Activated T-helper 2 cell treated with anti-CD3 and anti-CD28 coated beads, Interferon-gamma antibody, Interleukin-2, Interleukin-4, amounts not matched to agents 10 μg/mL and 5 μg/mL and 100 μg/mL, durations not matched to agents 14 hours and 24 hours and 36 hours (primary cell): ENCODE measurements at regions of chr4 and their contacts with region 1.

Region 1: GRCh38 chr4:26288355-26288909 is 32.4 kb upstream of the RBPJ start:
- DNase-seq: peak; percentile 20
- H3K4me3 Mint-ChIP-seq: no peak overlapping the region
- H3K27ac Mint-ChIP-seq: peak overlapping the region; percentile 81
- H3K4me1 Mint-ChIP-seq: peaks cover 24% of the 10 kb centered on the region
- H3K27me3 Mint-ChIP-seq: no peaks in the 10 kb centered on the region

Region 2: DNA sequence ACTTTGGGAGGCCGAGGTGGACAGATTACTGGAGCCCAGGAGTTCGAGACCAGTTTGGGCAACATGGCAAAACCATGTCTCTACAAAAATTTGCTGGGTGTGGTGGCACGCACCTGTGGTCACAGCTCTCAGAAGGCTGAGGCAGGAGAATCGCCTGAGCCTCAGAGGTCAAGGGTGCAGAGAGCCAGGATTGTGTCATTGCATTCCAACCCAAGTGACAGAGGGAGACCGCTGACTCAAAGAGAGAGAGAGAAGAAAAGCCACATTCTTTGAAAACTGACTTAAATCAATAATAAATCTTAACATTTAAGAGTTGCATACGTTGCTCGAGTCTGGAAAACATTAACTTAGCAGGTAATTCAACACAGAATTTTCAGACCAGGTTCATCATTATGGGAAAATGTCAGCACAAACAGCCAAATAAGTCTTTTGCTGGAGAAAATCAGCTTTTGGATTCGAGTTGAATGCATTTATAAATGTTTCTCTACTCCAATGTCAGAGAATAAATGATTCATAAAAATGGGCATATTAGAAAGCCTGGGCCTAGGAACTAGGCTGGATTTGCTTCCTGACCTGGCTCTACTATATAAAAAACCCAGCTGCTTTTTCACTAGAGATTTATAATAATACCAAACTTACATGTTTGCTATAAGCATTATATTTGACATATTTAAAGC is 35.9 kb before region 1 on chr4:
- intact Hi-C with region 1: loop called (anchors 5 kb)
- DNase-seq: no peak
- H3K4me3 Mint-ChIP-seq: no peak overlapping the region
- H3K27ac Mint-ChIP-seq: peak overlapping the region; percentile 42
- H3K4me1 Mint-ChIP-seq: peaks cover 6% of the 10 kb centered on the region
- H3K27me3 Mint-ChIP-seq: no peaks in the 10 kb centered on the region

Region 3: DNA sequence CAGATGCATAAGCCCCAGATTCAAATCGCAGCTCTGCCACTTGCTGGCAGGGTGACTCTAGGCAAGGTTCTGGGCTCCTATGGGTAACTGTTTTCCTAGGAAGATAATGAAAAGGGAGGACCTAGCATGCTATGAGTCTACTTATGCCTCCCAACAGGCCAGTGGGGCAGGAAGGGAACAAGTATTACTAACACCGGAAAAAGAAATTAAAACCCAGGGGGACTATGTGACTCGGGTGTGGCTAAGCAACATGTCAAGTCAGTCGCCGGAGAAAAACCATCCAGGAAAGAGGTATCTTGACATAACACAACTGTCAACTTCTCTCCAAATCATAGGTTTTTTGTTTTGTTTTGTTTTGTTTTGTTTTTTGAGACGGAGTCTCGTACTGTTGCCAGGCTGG is 13.2 kb before region 1 on chr4:
- intact Hi-C with region 1: loop called (anchors 2 kb)
- DNase-seq: no peak
- H3K4me3 Mint-ChIP-seq: no peak overlapping the region
- H3K27ac Mint-ChIP-seq: no peak overlapping the region
- H3K4me1 Mint-ChIP-seq: peaks cover 40% of the 10 kb centered on the region
- H3K27me3 Mint-ChIP-seq: no peaks in the 10 kb centered on the region

Region 4: GRCh38 chr4:26299254-26299882 is 10.9 kb after region 1 on chr4:
- intact Hi-C with region 1: loop called (anchors 1 kb)
- DNase-seq: no peak
- H3K4me3 Mint-ChIP-seq: peak overlapping the region; percentile 39
- H3K27ac Mint-ChIP-seq: peak overlapping the region; percentile 81
- H3K4me1 Mint-ChIP-seq: peaks cover 45% of the 10 kb centered on the region
- H3K27me3 Mint-ChIP-seq: no peaks in the 10 kb centered on the region

Region 5: DNA sequence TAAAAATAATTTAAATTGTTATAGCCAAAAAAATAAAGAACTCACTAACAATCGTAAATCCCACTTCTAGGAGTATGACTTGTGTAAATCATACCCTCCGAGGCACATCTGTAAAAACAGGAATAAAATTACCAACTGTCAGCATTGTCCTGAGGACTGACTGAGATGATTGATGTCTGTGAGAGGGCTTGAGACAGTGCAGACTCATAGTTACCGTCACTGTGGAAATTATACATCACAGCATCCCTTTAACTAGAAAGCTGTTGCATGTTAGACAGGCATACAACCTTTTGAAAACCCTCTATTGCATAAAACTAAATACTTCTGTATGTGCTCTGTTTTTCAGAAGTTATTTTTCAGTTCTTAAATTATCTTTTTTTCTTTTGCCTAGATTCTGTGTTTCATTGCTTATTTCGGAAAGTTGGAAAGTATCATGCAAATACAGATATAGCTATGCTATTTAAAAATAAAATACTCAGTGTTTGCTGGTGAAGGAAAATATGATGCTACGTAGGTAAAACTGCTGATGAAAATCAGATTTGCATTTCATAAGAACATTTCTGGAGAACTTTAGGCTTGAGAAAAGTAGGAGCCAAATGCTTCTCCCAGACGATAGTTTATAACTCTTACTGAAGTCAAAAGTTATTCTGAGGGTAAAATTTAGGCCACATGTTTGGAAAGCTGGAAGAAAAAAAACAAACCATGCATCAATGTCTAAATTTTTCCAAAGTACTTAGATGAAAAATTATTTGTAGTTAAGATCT is 18.8 kb after region 1 on chr4:
- intact Hi-C with region 1: loop called (anchors 1 kb)
- DNase-seq: no peak
- H3K4me3 Mint-ChIP-seq: peak overlapping the region; percentile 2
- H3K27ac Mint-ChIP-seq: peak overlapping the region; percentile 91
- H3K4me1 Mint-ChIP-seq: peaks cover 43% of the 10 kb centered on the region
- H3K27me3 Mint-ChIP-seq: no peaks in the 10 kb centered on the region

Region 6: GRCh38 chr4:26330186-26330787 is 41.9 kb after region 1 on chr4:
- intact Hi-C with region 1: no loop called
- DNase-seq: no peak
- H3K4me3 Mint-ChIP-seq: peak overlapping the region; percentile 4
- H3K27ac Mint-ChIP-seq: peak overlapping the region; percentile 10
- H3K4me1 Mint-ChIP-seq: peaks cover 59% of the 10 kb centered on the region
- H3K27me3 Mint-ChIP-seq: no peaks in the 10 kb centered on the region